Activated naive CD8-positive, alpha-beta T cell treated with anti-CD3 and anti-CD28 coated beads, Interleukin-2, amount 10 ng/mL, durations not matched to agents 7 days and 5 days (primary cell): ENCODE measurements at regions of chr3 and their contacts with region 1.

Region 1: GRCh38 chr3:121660356-121661171 is at the start of gene HCLS1:
- DNase-seq: peak; percentile 80
- ATAC-seq: peak; percentile 86
- H3K4me3 Mint-ChIP-seq: peak within 1 kb of the TSS; percentile 96
- H3K27ac Mint-ChIP-seq: peak within 1 kb of the TSS; percentile 100
- H3K4me1 Mint-ChIP-seq: peaks cover 44% of the 10 kb centered on the region
- H3K27me3 Mint-ChIP-seq: no peaks in the 10 kb centered on the region
- total RNA-seq, gene HCLS1: 316 to 318 TPM

Region 2: GRCh38 chr3:121637922-121638321 is 22.6 kb before region 1 on chr3:
- POLR2A ChIA-PET with region 1: no interaction called
- DNase-seq: no peak
- ATAC-seq: no peak
- H3K4me3 Mint-ChIP-seq: no peak overlapping the region
- H3K27ac Mint-ChIP-seq: no peak overlapping the region
- H3K4me1 Mint-ChIP-seq: peaks cover 3% of the 10 kb centered on the region
- H3K27me3 Mint-ChIP-seq: no peaks in the 10 kb centered on the region

Region 3: DNA sequence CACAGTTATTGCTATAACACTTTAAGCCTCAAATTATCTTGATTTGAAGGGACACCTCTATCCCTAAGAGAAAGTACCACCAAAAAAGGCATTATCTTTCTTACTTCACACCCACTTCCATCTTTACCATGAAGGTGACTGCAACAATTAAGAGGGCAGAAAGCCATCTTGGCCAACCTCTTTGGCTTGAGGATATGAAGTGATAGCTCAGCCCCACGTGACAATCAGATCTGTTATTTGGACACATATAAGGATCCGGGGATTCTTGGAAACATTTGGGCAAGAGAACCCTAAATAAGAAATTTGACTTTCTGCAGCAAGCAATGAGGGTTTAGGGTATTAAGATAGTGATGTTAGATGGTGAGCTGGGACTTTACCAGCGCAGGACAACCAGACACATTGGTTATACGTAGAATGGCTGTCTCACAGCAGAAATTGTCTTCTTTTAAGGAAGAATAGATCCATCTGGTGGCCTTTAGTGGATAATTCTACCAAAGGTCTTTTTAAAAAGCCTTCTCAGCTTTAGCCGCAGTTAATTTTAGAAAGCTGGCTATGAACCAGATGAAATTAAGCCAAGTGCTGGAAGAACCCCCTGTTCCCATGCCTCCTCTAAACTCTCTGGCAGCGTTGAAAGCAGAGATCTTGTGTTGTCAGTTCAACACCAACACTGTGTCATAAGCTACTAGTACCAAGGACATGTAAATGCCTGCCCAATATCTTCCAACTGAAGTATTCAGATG is 12.2 kb before region 1 on chr3:
- POLR2A ChIA-PET with region 1: interaction called, 10 read pairs
- DNase-seq: no peak
- ATAC-seq: no peak
- H3K4me3 Mint-ChIP-seq: no peak overlapping the region
- H3K27ac Mint-ChIP-seq: no peak overlapping the region
- H3K4me1 Mint-ChIP-seq: peaks cover 26% of the 10 kb centered on the region
- H3K27me3 Mint-ChIP-seq: no peaks in the 10 kb centered on the region

Region 4: DNA sequence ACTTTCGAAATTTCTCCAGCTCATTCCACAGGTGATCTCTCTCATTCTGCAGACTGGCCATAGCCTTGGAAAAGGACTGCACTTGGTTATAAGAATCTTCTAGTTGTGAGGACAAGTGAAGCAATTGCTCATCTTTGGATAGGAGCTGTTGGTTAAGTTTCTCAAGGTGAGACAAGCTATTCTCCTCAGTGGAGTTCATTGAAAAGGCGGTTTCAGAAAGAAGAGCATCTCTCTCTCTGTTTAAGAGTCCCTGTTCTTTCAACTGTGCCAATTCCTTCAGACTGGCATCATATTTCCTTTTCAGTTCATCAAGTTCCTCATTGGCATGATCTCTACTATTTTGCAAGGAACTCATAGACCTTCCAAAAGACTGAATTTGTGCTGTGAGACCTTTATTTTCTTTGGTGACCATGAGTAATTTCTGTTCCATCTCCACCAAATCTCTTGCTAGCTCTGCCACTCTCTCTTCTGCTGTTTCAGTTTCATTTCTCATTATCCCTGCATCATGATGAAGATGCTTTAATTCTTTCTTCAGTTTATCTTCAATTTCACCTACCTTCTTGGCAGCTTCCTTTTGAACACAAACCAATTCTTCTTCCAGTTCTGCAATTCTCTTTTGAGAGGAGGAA is 30.3 kb after region 1 on chr3:
- POLR2A ChIA-PET with region 1: interaction called, 16 read pairs
- DNase-seq: no peak
- ATAC-seq: peak; percentile 78
- H3K4me3 Mint-ChIP-seq: peak overlapping the region; percentile 58
- H3K27ac Mint-ChIP-seq: peak overlapping the region; percentile 77
- H3K4me1 Mint-ChIP-seq: peaks cover 11% of the 10 kb centered on the region
- H3K27me3 Mint-ChIP-seq: no peaks in the 10 kb centered on the region

Region 5: GRCh38 chr3:121749276-121750086 is 88.9 kb after region 1 on chr3 and contains the start of gene GOLGB1:
- POLR2A ChIA-PET with region 1: interaction called, 23 read pairs
- DNase-seq: peak; percentile 86
- ATAC-seq: peak; percentile 98
- H3K4me3 Mint-ChIP-seq: no peak within 1 kb of the TSS
- H3K27ac Mint-ChIP-seq: no peak within 1 kb of the TSS
- H3K4me1 Mint-ChIP-seq: peaks cover 5% of the 10 kb centered on the region
- H3K27me3 Mint-ChIP-seq: peaks cover 19% of the 10 kb centered on the region
- total RNA-seq, gene GOLGB1: 36.4 to 41.3 TPM